ENCODE measurements at regions of chr6 and their contacts with region 1.

Region 1: DNA sequence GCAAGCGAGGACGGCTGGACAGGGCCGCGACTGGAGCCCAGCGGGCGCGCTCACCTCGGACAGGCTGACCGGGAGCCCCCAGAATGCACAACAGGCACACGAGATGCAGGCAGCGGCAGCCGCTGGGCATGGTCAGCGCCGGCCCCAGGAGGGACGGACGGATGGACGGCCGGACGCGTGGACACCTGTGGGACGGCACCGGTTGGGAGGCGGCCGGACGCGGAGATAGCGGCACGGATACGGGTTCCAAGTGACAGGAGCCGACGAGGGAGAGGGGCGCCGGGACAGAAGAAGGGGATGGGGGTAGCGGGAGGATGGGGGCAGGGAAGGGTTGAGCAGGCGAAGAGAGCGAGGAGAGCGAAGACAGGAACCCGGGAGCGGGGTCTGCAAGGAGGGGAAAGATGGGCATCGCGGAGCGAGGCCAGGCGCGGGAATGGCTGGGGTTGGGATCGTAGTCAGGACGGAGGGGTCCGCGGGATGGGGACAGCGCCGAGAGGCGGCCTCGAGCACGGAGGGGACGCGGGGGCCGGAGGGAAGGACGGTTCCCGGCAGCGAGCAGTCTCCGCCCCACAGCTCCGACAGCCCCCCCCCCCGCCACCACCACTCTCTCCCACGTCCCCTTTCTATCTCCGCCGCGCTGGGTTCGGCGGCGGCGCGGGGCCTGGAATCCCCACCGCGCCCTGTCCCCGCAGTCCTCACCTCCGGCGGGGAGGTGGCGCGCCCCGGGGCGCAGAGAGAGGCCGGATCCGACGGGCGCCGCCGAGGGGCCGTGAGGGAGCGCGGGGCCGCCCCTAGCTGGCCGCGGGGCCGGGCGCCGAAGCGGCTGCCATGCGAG is 435 bp downstream of the DLK2 start:
- DNase-seq: peak in 7 of 9 donors; percentile 28 to 42 (median 31)
- ATAC-seq: peak; percentile 61
- H3K4me3 ChIP-seq: peak overlapping the region; percentile 69
- H3K4me3 Mint-ChIP-seq: peak overlapping the region; percentile 71 to 92 (median 85)
- H3K27ac ChIP-seq: peak overlapping the region; percentile 63
- H3K27ac Mint-ChIP-seq: peak overlapping the region in 7 of 9 donors; percentile 34 to 91 (median 70)
- H3K4me1 ChIP-seq: peaks cover 6 to 7% of the 10 kb centered on the region in 2 donors
- H3K4me1 Mint-ChIP-seq: peaks cover 10 to 19% (median 12%) of the 10 kb centered on the region in 7 donors
- H3K27me3 ChIP-seq: no peaks in the 10 kb centered on the region
- H3K27me3 Mint-ChIP-seq: peaks cover 0 to 34% (median 0%) of the 10 kb centered on the region in 5 donors

Region 2: DNA sequence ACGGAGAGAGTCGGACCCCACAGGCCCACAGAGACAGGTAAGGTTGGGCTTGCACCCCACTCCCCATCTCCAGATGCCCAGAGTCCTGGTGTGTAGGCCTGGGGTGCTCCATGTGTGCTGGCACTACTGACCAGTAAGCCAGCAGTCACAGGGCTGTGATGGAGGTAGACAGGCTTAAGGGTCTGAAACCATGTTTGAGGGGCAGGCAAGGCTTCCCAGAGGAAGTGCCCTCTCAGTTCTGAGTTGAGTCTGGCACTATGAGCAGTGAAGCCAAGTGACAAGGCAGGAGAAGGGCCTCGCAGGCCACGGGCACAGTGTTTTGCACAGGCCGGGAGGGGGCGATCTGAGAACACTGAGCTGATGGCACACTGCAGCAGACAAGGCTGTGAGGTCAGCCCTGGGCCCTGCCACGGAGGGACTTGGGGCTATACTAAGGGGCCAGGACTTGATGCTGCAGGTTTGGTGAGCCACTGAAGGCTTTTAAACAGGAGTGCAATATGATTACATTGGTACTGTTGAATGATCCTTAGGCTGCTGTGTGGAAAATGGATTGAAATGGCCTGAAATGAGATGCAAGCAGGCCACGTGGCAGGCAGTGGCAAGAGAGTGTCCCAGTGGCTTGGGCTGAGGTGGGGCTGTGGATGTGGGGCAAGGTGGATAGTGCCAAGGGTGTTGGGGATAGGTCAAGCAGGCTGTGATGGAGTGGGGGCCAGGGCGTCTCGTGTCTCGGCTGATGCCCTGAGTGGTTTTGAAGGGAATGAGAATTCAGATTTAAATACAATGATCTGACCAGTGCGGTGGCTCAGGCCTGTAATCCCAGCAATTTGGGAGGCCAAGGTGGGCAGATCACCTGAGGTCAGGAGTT is 191.4 kb before region 1 on chr6:
- CTCF ChIA-PET with region 1: no interaction called
- POLR2A ChIA-PET with region 1: no interaction called
- intact Hi-C with region 1: loop called in 1 of 2 experiments (anchors 1 kb)
- DNase-seq: peak; percentile 49 to 74 (median 66)
- ATAC-seq: peak; percentile 93
- H3K4me3 ChIP-seq: no peak overlapping the region
- H3K4me3 Mint-ChIP-seq: peak overlapping the region in 1 of 10 donors; percentile 53
- H3K27ac ChIP-seq: no peak overlapping the region
- H3K27ac Mint-ChIP-seq: peak overlapping the region in 2 of 9 donors; percentile 4 to 43
- H3K4me1 ChIP-seq: no peaks in the 10 kb centered on the region
- H3K4me1 Mint-ChIP-seq: peaks cover 0 to 17% (median 0%) of the 10 kb centered on the region in 7 donors
- H3K27me3 ChIP-seq: no peaks in the 10 kb centered on the region
- H3K27me3 Mint-ChIP-seq: peaks cover 0 to 17% (median 0%) of the 10 kb centered on the region in 5 donors

Region 3: DNA sequence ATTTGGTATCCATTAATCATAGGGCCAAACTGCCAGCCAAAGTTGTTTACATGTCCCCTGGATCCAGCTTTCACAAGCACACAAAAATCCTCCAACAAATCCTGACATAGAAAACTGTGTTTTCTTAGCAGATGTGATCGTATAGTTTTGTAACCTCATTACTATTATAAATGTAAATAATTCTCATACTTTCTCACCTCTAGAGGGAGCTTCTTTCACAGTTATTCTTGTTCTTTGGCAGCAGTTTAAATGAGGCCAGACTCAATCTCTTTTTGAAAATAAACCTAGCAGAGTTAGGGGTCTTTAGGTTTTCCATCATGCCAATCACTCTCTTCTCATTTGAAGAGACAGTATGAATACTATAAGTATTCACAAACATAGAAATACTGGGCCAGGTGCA is 68.4 kb before region 1 on chr6:
- CTCF ChIA-PET with region 1: no interaction called
- POLR2A ChIA-PET with region 1: no interaction called
- intact Hi-C with region 1: loop called in 1 of 2 experiments (anchors 1 kb)
- DNase-seq: peak in 3 of 9 donors; percentile 43 to 64 (median 44)
- ATAC-seq: no peak
- H3K4me3 ChIP-seq: no peak overlapping the region
- H3K4me3 Mint-ChIP-seq: peak overlapping the region in 4 of 10 donors; percentile 23 to 63 (median 40)
- H3K27ac ChIP-seq: no peak overlapping the region
- H3K27ac Mint-ChIP-seq: peak overlapping the region in 8 of 9 donors; percentile 6 to 95 (median 73)
- H3K4me1 ChIP-seq: peaks cover 46 to 59% of the 10 kb centered on the region in 2 donors
- H3K4me1 Mint-ChIP-seq: peaks cover 54 to 78% (median 72%) of the 10 kb centered on the region in 7 donors
- H3K27me3 ChIP-seq: no peaks in the 10 kb centered on the region
- H3K27me3 Mint-ChIP-seq: peaks cover 0 to 67% (median 4%) of the 10 kb centered on the region in 5 donors

Region 4: GRCh38 chr6:43477235-43478007 is 22.5 kb after region 1 on chr6 and contains the start of gene TJAP1:
- CTCF ChIA-PET with region 1: no interaction called
- POLR2A ChIA-PET with region 1: interaction called, 4 read pairs
- intact Hi-C with region 1: loop called (anchors 1 kb)
- DNase-seq: peak; percentile 89 to 99 (median 95)
- ATAC-seq: peak; percentile 100
- H3K4me3 ChIP-seq: peak within 1 kb of the TSS; percentile 83
- H3K4me3 Mint-ChIP-seq: peak within 1 kb of the TSS; percentile 87 to 99 (median 93)
- H3K27ac ChIP-seq: peak within 1 kb of the TSS; percentile 96
- H3K27ac Mint-ChIP-seq: peak within 1 kb of the TSS; percentile 90 to 98 (median 96)
- H3K4me1 ChIP-seq: peaks cover 10 to 16% of the 10 kb centered on the region in 2 donors
- H3K4me1 Mint-ChIP-seq: peaks cover 37 to 54% (median 51%) of the 10 kb centered on the region in 7 donors
- H3K27me3 ChIP-seq: no peaks in the 10 kb centered on the region
- H3K27me3 Mint-ChIP-seq: no peaks in the 10 kb centered on the region
- total RNA-seq, gene TJAP1: 29.2 to 55.2 (median 33.5) TPM

Region 5: DNA sequence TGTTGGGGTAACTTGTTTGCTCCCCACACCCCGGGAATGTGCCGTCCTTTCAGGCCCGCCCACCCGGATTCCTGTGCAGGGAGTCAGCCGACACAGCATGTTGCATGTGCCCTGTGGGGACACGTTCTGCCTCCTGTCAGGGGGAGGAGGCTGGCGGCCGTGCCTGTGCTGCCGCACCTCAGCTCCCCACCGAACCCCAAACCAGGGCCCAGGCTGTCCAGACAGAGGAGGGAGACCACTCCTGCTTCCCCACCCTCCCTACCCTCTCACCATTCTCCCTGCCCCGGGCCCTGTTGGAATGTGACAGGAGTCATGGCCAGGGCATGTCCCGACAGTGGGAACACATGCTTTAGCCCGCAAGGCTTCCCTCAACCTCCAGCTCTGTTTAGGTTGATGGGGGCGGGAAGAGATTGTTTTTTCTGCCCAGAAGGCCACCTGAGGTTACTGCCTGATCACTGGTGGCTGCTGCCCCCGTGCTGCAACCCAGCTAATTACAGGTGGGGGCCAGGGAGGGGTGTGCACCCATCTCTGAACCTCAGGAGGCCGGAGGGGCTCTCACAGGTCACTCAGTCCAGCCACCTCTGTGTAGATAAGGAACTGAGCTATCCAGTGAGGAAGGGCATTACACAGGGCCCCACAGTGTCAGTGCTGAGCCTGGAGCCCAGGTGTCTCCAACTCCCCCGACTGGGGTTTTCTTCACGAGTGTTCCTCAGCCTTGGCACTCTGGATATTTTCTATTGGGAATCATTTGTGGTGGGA is 41.6 kb after region 1 on chr6:
- CTCF ChIA-PET with region 1: interaction called, 4 read pairs
- POLR2A ChIA-PET with region 1: interaction called, 3 read pairs
- intact Hi-C with region 1: loop called in 1 of 2 experiments (anchors 1 kb)
- DNase-seq: no peak
- ATAC-seq: no peak
- H3K4me3 ChIP-seq: no peak overlapping the region
- H3K4me3 Mint-ChIP-seq: no peak overlapping the region
- H3K27ac ChIP-seq: peak overlapping the region; percentile 36
- H3K27ac Mint-ChIP-seq: peak overlapping the region in 1 of 9 donors; percentile 38
- H3K4me1 ChIP-seq: peaks cover 12 to 15% of the 10 kb centered on the region in 2 donors
- H3K4me1 Mint-ChIP-seq: peaks cover 15 to 38% (median 27%) of the 10 kb centered on the region in 7 donors
- H3K27me3 ChIP-seq: no peaks in the 10 kb centered on the region
- H3K27me3 Mint-ChIP-seq: no peaks in the 10 kb centered on the region

Region 6: DNA sequence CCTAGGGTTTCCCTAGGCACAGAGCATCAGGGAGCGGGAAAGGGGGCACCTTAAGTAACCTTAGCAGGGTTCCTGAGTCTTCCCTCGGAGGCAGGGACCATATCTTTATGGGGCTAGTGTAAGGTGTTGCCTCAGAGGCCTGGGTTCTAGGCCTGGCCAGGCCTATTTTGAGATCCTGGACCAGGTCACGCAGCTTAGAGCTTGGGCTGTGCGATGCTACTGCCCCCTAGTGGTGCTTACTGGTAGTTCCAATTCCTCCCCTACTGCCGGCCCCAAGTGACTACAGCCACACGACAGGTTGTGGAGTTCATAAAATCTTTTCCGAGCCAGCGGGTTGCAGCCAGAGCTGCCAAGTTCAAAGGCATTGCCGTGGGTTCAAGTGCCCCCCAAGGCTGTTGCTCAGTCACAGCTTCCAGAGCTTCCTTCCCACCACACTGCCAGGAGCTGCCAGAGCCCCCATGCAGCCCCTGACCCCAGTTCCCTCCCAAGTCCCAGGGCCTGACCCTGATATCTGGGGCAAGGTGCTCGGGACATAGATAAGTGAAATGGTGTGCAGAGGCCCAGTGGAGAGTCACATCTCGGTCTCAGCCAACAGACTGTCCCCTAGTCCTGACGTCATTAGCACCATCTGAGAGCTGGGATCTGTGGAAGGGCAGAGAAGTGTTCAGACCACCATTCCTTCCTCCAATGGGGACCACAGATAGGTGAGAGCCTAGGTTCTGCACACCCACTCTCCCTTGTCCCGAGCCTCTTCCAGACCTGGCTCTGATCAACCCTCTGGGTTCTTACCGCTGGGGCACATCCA is 52.0 kb after region 1 on chr6:
- CTCF ChIA-PET with region 1: interaction called, 13 read pairs
- POLR2A ChIA-PET with region 1: interaction called, 3 read pairs
- intact Hi-C with region 1: loop called (anchors 1 kb)
- DNase-seq: peak; percentile 61 to 82 (median 70)
- ATAC-seq: peak; percentile 84
- H3K4me3 ChIP-seq: no peak overlapping the region
- H3K4me3 Mint-ChIP-seq: peak overlapping the region in 1 of 10 donors; percentile 29
- H3K27ac ChIP-seq: no peak overlapping the region
- H3K27ac Mint-ChIP-seq: peak overlapping the region in 5 of 9 donors; percentile 24 to 69 (median 58)
- H3K4me1 ChIP-seq: peaks cover 0 to 4% of the 10 kb centered on the region in 2 donors
- H3K4me1 Mint-ChIP-seq: peaks cover 10 to 29% (median 20%) of the 10 kb centered on the region in 7 donors
- H3K27me3 ChIP-seq: peaks cover 0 to 9% of the 10 kb centered on the region in 2 donors
- H3K27me3 Mint-ChIP-seq: peaks cover 15 to 22% (median 19%) of the 10 kb centered on the region in 5 donors

Region 7: GRCh38 chr6:43575772-43576551 is 121.0 kb after region 1 on chr6 and contains the starts of genes POLH and XPO5:
- CTCF ChIA-PET with region 1: no interaction called
- POLR2A ChIA-PET with region 1: no interaction called
- intact Hi-C with region 1: loop called in 1 of 2 experiments (anchors 10 kb)
- DNase-seq: peak; percentile 83 to 94 (median 88)
- ATAC-seq: peak; percentile 99
- H3K4me3 ChIP-seq: peak within 1 kb of the TSS; percentile 77
- H3K4me3 Mint-ChIP-seq: peak within 1 kb of the TSS; percentile 90 to 100 (median 98)
- H3K27ac ChIP-seq: peak within 1 kb of the TSS; percentile 89
- H3K27ac Mint-ChIP-seq: peak within 1 kb of the TSS; percentile 78 to 94 (median 92)
- H3K4me1 ChIP-seq: peaks cover 20 to 21% of the 10 kb centered on the region in 2 donors
- H3K4me1 Mint-ChIP-seq: peaks cover 21 to 61% (median 40%) of the 10 kb centered on the region in 7 donors
- H3K27me3 ChIP-seq: no peaks in the 10 kb centered on the region
- H3K27me3 Mint-ChIP-seq: no peaks in the 10 kb centered on the region
- total RNA-seq, gene POLH: 9.1 to 65.6 (median 19.3) TPM
- total RNA-seq, gene XPO5: 35.0 to 107 (median 41.9) TPM

Measured in naive thymus-derived CD4-positive, alpha-beta T cell (primary cell).